Calu3 (cell line): ENCODE measurements at regions of chr12 and their contacts with region 1.

Region 1: DNA sequence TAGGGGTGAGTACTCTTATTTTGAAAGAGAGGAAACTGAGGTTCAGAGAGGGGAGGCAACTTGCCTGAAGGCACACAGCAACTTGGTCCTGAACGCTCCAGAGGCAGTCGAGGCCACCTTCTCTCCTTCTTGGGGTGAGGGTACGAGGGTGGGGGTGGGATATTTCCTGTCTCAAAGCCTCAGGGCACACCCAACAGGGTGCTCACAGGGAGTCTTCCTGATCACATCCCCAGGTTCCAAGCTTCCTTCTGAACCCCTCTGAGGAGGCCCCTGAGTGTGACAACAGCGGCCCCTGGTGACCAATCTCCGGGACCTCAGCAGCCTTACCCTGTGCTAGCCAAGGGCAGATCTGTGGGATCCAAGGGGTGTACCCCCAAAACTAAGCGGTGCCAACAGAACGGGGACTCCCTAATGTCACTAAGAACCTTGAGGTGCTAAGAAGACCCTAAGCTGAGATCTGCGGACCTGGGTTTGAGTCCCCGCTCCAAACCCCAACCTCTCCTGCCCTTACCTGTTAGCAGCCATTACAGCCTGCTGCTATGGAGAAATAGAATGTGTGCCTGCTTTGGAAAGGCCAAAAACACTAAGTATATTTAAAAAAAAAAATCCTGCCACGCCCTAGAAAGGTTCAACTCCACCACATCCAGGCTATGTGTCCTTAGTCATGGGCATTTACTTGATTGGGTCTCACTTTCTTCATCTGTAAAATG is 57.9 kb downstream of the TRPV4 start:
- DNase-seq: peak; percentile 90
- H3K4me3 Mint-ChIP-seq: no peak overlapping the region
- H3K27ac Mint-ChIP-seq: no peak overlapping the region
- H3K4me1 Mint-ChIP-seq: peaks cover 17% of the 10 kb centered on the region
- H3K27me3 Mint-ChIP-seq: no peaks in the 10 kb centered on the region
- CTCF ChIP-seq: peak; percentile 95

Region 2: GRCh38 chr12:109428037-109428629 is 347.2 kb before region 1 on chr12:
- CTCF ChIA-PET with region 1: interaction called, 5 read pairs
- intact Hi-C with region 1: loop called (anchors 1 kb)
- DNase-seq: peak; percentile 86
- H3K4me3 Mint-ChIP-seq: no peak overlapping the region
- H3K27ac Mint-ChIP-seq: no peak overlapping the region
- H3K4me1 Mint-ChIP-seq: peaks cover 9% of the 10 kb centered on the region
- H3K27me3 Mint-ChIP-seq: peaks cover 33% of the 10 kb centered on the region
- CTCF ChIP-seq: peak; percentile 91

Region 3: DNA sequence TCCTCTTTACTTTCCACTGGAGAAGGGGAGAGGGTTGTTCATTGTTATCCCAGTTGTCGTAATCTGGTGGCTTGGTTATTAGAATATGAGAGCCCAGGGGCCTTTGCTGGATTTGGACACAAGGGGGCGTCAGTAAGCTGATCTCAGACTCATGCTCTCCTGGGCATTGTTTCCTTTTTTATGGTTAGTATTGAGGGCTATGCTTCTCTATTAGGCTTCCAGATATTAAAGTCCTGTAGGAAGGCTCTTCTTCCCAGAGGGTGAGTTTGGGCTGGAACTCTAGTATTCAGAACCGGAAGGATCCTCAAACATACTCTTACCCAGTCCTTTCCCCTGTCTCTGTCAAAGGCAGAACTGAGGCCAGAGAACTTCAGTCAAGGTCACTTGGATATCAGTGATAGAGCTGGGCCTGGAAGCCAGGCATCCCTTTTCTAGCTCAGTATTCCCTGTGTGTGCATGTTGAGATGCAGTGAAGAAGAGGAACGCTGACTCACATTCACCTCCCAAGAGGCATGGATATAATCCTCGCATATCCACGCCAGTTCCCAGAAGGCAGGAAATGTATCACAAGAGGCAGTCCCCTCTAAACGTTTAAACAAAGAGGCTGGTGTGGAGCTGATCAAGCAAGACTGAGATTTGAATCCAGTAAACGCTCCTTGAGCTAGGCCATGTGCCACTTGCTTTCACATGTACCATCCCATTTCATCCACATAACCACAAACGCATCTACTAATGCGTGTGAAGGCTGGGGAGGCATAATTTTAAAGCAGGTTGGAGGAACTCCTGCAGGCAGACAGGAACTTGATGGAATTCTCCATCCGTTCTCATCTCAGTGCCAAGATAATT is 256.3 kb before region 1 on chr12:
- CTCF ChIA-PET with region 1: interaction called, 10 read pairs
- intact Hi-C with region 1: loop called (anchors 1 kb)
- DNase-seq: peak; percentile 64
- H3K4me3 Mint-ChIP-seq: no peak overlapping the region
- H3K27ac Mint-ChIP-seq: no peak overlapping the region
- H3K4me1 Mint-ChIP-seq: no peaks in the 10 kb centered on the region
- H3K27me3 Mint-ChIP-seq: no peaks in the 10 kb centered on the region
- CTCF ChIP-seq: peak; percentile 53

Region 4: GRCh38 chr12:109597795-109598427 is 177.4 kb before region 1 on chr12:
- CTCF ChIA-PET with region 1: interaction called, 56 read pairs
- intact Hi-C with region 1: loop called (anchors 1 kb)
- DNase-seq: peak; percentile 93
- H3K4me3 Mint-ChIP-seq: no peak overlapping the region
- H3K27ac Mint-ChIP-seq: no peak overlapping the region
- H3K4me1 Mint-ChIP-seq: no peaks in the 10 kb centered on the region
- H3K27me3 Mint-ChIP-seq: no peaks in the 10 kb centered on the region
- CTCF ChIP-seq: peak; percentile 94

Region 5: DNA sequence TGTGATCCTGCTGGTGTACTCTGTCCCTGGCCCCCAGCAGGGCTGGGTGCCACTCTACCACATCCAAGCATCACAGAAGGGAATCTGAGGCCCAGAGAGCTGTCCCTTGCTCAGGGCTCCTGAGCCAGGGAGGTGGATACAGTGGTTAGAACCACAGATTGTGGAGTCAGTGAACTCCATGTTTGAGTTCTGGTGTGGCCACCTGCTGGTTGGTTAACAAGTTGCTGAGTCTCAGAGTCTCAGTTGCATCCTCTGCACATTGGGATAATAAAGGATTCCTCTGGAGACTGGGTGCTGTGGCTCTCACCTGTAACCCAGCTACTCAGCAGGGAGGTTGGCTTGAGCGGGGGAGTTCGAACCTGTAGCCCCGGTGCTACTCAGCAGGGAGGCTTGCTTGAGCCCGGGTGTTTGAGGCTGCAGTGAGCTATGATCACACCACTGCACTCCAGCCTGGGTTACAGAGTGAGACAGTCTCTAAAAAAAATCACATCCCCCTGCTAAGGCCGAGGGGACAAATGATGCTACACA is 162.3 kb before region 1 on chr12:
- CTCF ChIA-PET with region 1: no interaction called
- intact Hi-C with region 1: loop called (anchors 5 kb)
- DNase-seq: no peak
- H3K4me3 Mint-ChIP-seq: no peak overlapping the region
- H3K27ac Mint-ChIP-seq: no peak overlapping the region
- H3K4me1 Mint-ChIP-seq: no peaks in the 10 kb centered on the region
- H3K27me3 Mint-ChIP-seq: peaks cover 100% of the 10 kb centered on the region
- CTCF ChIP-seq: peak; percentile 44

Region 6: DNA sequence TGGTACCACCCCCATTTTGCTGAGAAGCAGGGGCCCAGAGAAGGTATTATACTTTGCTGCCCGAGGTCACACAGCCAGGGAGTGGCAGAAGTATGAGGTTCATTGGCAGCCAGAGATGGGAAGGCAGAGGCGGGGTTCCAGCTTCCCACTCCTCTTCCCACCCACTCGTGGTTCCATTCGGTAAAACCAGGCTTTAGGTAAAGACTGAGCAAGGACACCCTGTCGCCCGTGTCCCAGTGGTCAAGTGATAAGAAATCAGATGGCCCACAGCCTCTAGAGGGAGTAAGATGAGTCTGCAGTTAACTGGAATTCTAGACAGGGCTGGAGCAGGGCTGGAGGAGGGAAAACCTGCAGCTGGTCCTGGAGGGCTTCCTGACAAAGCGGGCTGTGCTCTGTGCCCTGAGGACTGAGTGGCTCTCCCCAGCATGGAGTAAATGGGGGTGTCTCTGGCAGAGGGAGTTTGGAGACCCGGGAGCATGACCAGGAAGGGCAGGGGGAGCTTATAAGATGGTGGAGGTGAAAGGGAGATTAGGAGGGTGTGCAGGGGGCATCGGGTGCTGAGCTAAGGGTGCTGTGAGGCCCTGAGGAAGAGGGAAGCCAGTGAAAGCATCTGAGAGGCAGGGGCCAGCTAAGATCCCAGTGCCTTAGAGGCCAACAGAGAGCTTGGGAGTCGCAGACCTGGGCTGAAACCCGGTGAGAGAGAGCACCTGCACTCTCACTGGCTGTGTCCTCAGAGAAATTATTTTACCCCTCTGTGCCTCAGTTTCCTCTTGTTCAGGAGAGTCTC is 55.9 kb before region 1 on chr12:
- CTCF ChIA-PET with region 1: interaction called, 9 read pairs
- intact Hi-C with region 1: loop called (anchors 2 kb)
- DNase-seq: no peak
- H3K4me3 Mint-ChIP-seq: no peak overlapping the region
- H3K27ac Mint-ChIP-seq: no peak overlapping the region
- H3K4me1 Mint-ChIP-seq: peaks cover 8% of the 10 kb centered on the region
- H3K27me3 Mint-ChIP-seq: peaks cover 30% of the 10 kb centered on the region
- CTCF ChIP-seq: no peak

Region 7: DNA sequence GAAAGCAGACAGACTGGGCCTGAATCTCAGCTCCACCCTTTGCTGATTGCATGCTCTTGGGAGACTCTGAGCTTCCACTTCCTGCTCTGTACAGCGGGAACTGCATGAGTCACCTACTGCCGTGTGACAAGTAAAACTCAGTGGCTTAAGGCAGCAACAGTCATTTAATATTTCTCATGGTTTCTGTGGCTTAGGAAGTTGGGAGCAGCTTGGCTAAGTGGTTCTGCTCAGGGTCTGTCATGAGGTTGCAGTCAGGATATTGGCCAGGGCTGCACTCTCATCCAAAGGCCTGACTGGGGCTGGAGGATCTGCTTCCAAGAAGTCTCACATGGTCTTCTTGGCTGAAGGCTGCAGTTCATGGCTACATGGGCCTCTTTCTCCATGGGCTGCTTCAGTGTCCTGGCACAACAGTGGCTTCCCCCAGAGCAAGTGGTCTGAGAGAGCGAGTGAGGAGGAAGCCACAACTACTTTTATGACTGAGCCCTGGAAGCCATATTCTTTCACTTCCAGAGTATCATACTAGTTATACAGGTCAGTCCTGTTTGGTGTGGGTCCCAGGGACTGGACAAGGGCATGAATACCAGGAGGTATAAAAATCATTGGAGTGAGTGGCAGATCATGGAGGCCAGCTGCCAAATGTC is 12.0 kb before region 1 on chr12:
- CTCF ChIA-PET with region 1: interaction called, 11 read pairs
- intact Hi-C with region 1: no loop called
- DNase-seq: peak; percentile 59
- H3K4me3 Mint-ChIP-seq: no peak overlapping the region
- H3K27ac Mint-ChIP-seq: peak overlapping the region; percentile 33
- H3K4me1 Mint-ChIP-seq: peaks cover 7% of the 10 kb centered on the region
- H3K27me3 Mint-ChIP-seq: no peaks in the 10 kb centered on the region
- CTCF ChIP-seq: no peak